ENCODE measurements at regions of chrX and their contacts with region 1.

Region 1: DNA sequence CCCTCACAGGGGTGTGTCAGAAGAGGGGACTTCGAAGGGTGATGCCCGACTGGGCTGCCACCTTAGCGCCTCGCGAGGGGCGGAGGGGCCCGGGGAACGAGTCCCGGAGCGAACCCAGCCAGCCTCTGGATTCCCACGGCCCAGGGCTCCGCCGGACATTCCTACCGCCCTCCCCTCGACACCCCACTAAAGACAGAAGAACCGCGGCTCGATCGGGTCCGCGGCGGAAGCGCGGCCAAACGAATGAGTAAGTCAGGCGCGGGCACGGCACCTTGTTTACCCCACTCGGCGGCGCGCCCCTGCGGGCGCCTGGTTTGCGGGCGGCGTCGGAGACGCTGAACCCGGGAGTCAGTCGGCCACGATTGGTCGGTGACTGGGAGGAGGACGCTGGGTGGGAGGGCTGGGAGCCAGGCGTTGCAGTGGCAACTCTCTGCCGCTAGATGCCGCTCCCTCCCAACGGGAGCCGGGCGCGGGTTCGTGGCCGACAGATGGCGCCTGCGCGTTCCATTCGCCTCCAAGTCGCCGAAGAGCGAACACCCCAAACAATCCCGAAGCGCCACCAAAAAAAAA is 1.4 kb upstream of the STAG2 start:
- DNase-seq: peak; percentile 92
- H3K4me3 Mint-ChIP-seq: peak overlapping the region; percentile 89
- H3K27ac Mint-ChIP-seq: peak overlapping the region; percentile 99
- H3K4me1 Mint-ChIP-seq: peaks cover 21% of the 10 kb centered on the region
- H3K27me3 Mint-ChIP-seq: no peaks in the 10 kb centered on the region

Region 2: DNA sequence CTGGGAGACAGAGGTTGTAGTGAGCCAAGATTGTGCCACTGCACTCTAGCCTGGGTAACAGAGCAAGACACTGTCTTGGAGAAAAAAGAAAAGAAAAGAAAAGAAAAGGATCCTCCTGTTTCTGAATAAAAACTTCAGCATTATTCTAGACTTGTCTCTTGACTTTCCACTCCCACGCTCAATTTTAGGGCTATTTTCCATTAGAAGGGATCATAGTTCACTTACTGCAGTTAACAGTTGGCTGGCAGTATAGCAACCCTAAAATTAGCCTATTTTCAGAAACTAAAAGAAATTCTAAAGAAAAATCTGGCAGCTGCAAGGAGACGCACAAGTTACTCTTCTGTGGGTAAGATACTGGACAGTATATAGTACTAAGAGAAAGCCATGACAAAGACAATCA is 255.3 kb before region 1 on chrX:
- CTCF ChIA-PET with region 1: no interaction called
- POLR2A ChIA-PET with region 1: no interaction called
- DNase-seq: no peak
- H3K4me3 Mint-ChIP-seq: no peak overlapping the region
- H3K27ac Mint-ChIP-seq: no peak overlapping the region
- H3K4me1 Mint-ChIP-seq: peaks cover 9% of the 10 kb centered on the region
- H3K27me3 Mint-ChIP-seq: no peaks in the 10 kb centered on the region

Region 3: DNA sequence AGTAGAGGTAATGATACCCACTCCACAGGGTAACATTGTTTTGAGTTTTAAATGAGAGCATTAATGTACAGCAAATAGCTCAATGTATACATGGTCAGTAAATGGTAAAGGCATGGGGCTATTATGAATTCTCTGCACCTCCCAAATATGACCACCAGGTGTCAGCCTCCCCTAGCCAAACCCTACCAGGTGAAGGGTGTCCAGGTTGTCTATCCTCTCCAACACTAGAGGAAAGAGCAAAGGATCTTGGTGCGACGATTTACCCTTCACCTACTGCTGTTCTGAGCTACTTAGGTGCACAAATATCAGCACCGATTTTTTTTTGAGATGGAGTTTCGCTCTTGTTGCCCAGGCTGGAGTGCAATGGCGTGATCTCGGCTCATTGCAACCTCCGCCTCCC is 126.7 kb before region 1 on chrX:
- CTCF ChIA-PET with region 1: interaction called, 17 read pairs
- POLR2A ChIA-PET with region 1: interaction called, 4 read pairs
- DNase-seq: peak; percentile 67
- H3K4me3 Mint-ChIP-seq: no peak overlapping the region
- H3K27ac Mint-ChIP-seq: no peak overlapping the region
- H3K4me1 Mint-ChIP-seq: peaks cover 7% of the 10 kb centered on the region
- H3K27me3 Mint-ChIP-seq: peaks cover 7% of the 10 kb centered on the region

Region 4: DNA sequence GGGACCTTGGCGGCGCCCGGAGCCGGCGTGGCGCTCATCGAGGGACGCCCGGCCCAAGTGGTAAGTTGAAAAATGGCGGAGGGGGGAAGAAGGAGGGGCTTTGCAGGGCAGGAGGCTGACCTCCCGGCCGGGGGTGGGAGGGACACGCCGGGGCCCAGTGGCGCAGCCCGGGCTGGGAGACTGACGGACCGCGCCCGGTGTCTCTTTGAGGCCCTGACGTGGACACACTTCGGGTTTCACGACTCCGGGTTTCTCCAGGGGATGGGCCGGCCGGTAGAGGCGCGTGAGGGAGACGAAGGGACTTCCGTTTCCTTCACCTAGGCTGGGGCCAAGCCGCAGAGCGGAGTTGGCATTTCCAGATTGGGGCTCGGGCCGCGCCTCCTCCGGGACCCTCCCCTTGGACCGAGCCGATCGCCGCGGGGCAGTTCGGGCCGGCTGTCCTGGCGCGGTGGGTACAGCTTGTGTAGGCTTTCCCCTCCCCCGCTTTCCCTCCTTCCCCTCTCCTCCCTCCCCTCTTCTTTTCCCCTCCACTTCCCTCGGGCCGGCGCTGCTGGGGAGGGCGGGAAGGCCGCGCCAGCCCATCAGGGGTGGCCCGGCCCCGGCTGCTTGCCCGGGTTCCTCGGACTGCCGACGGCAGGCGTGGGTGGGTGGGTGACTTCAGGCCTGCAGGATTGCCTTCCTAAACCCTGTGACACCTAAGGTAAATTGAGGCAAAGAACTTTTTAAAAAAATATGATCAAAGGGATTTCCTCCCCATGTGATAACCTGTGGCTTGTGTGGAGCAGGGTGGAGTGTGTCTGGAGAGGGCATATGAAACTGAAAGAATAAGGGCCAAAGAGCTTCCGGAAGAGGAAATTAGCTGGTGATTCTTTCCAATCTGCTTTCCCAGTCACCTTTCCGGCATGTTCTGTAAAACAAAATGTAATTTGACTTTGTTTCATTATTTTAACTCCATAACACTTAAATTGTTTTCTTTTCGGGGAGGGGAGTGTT is 100.0 kb before region 1 on chrX and contains the start of gene XIAP:
- CTCF ChIA-PET with region 1: interaction called, 3 read pairs
- POLR2A ChIA-PET with region 1: interaction called, 22 read pairs
- DNase-seq: peak; percentile 75
- H3K4me3 Mint-ChIP-seq: peak within 1 kb of the TSS; percentile 88
- H3K27ac Mint-ChIP-seq: peak within 1 kb of the TSS; percentile 94
- H3K4me1 Mint-ChIP-seq: peaks cover 22% of the 10 kb centered on the region
- H3K27me3 Mint-ChIP-seq: no peaks in the 10 kb centered on the region
- total RNA-seq, gene XIAP: 47.6 to 53.3 TPM

Region 5: GRCh38 chrX:123943488-123943887 is 16.6 kb before region 1 on chrX:
- CTCF ChIA-PET with region 1: no interaction called
- POLR2A ChIA-PET with region 1: no interaction called
- DNase-seq: no peak
- H3K4me3 Mint-ChIP-seq: no peak overlapping the region
- H3K27ac Mint-ChIP-seq: no peak overlapping the region
- H3K4me1 Mint-ChIP-seq: no peaks in the 10 kb centered on the region
- H3K27me3 Mint-ChIP-seq: no peaks in the 10 kb centered on the region

Region 6: GRCh38 chrX:124026529-124026928 is 66.4 kb after region 1 on chrX:
- CTCF ChIA-PET with region 1: no interaction called
- POLR2A ChIA-PET with region 1: no interaction called
- DNase-seq: no peak
- H3K4me3 Mint-ChIP-seq: no peak overlapping the region
- H3K27ac Mint-ChIP-seq: no peak overlapping the region
- H3K4me1 Mint-ChIP-seq: peaks cover 5% of the 10 kb centered on the region
- H3K27me3 Mint-ChIP-seq: no peaks in the 10 kb centered on the region

Region 7: DNA sequence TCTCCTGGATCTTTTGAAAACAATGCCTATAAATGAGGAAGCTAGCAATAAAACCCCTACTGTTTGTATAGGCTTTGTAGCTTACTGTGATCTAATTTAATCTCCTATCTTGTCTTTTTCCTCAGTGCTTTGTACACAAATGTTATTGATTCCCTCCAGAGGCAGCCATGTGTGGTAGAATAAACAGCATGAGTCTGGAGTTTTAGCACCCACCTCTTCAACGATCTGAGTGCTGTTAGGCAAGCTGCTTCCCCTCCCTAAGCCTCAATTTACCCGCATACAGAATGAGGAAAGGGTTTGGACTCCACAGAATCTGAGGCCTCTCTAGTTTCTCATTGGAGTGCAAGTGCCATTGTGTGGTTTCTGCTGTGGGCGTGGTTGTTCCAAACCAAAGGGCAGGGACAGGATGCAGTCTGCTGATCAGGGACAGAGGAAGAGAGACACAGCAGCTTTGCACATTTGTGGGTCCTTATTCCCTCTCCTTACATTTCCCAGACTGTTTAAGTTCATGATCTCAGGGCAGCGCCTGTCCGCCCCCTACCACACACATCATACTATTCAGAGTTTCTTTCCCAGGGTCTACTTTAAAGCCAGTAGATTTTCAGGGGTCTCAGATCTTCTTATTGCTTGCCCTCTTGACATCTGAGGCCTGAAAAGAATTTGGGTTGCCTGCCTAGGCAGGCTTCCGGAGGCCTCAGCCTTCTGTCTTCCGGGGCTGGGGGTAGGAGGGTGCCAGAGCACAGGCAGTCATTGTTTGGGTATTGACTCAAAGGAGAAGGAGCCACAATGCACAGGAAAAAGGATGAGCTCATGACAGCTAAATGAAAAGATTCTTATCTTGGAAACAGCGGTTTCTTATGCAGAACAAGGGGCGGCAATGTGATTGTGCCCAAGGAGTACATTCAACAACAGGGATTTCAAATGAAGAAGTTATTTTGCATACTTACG is 257.5 kb after region 1 on chrX:
- CTCF ChIA-PET with region 1: no interaction called
- POLR2A ChIA-PET with region 1: interaction called, 11 read pairs
- DNase-seq: peak; percentile 74
- H3K4me3 Mint-ChIP-seq: peak overlapping the region; percentile 58
- H3K27ac Mint-ChIP-seq: peak overlapping the region; percentile 97
- H3K4me1 Mint-ChIP-seq: peaks cover 76% of the 10 kb centered on the region
- H3K27me3 Mint-ChIP-seq: no peaks in the 10 kb centered on the region

Region 8: DNA sequence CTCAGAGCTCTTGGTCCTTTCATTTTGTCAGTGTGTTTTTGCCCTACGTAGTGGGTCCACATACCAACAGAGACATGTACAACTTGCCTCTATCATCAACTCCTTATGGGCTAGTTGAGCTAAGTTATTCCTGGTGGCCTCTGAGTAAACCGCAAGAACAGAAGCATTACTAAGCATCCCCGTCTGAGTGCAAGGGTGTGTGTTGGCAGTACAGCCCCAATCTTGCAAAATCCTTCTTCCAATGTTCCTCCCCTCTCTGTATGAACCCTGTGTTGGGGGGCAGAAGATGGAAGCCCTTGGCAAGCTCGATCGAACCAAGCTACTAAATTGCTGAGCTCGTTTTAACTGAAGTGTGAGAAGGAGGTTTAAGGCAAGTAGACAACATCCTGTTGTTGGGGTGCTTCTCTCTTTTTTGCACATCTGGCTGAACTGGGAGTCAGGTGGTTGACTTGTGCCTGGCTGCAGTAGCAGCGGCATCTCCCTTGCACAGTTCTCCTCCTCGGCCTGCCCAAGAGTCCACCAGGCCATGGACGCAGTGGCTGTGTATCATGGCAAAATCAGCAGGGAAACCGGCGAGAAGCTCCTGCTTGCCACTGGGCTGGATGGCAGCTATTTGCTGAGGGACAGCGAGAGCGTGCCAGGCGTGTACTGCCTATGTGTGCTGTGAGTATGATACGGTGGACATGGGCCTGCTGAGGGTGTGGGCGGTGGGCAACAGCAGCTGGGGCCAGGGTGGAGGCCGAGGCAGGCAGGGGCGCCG is 386.2 kb after region 1 on chrX and contains the start of gene SH2D1A:
- CTCF ChIA-PET with region 1: no interaction called
- POLR2A ChIA-PET with region 1: interaction called, 26 read pairs
- DNase-seq: peak; percentile 51
- H3K4me3 Mint-ChIP-seq: peak within 1 kb of the TSS; percentile 94
- H3K27ac Mint-ChIP-seq: peak within 1 kb of the TSS; percentile 98
- H3K4me1 Mint-ChIP-seq: peaks cover 53% of the 10 kb centered on the region
- H3K27me3 Mint-ChIP-seq: no peaks in the 10 kb centered on the region
- total RNA-seq, gene SH2D1A: 58.3 to 61.2 TPM

Measured in activated CD4-positive, alpha-beta memory T cell treated with anti-CD3 and anti-CD28 coated beads, Interleukin-2, amount 10 ng/mL, durations not matched to agents 7 days and 5 days (primary cell).